Heart right ventricle (tissue), 16 donors: ENCODE measurements at regions of chr17 and their contacts with region 1.

Region 1: DNA sequence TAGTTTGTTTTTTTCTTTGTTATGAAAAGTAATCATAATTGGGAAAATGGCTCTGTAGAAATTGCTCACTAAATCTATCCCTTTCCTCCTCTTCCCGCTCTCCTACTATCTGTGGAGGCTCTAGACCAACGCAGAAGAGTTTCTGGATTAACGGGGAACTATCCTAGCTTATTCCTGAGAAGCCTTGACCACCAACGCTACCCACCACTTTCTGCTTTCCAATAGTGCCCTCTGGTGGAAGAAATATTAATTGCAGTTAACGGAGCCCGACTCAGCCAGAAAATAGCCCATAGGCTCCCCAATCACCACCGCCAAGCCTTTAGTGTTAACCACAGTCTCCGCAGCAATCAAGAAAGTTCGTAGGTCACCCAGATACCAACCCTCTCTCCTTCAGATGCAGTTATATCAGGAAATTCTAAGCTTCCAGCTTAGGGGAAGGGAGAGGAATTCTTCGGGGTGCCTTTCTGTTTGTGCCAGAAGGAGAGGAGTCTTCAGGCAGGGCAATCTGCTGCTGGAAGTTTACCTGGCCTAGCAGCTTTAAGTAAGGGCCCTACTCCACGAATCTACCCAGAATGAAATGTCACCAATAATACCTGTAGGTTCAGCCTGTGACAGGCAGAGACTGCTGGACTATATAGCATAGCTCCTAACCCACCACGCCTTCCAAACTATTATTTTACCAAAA is 23.0 kb upstream of the NSRP1 start:
- DNase-seq: peak in 1 of 2 donors; percentile 50
- ATAC-seq: peak; percentile 53 to 82 (median 74)
- H3K4me3 ChIP-seq: no peak overlapping the region
- H3K27ac ChIP-seq: no peak overlapping the region
- H3K4me1 ChIP-seq: peaks cover 0 to 10% (median 7%) of the 10 kb centered on the region in 9 donors
- H3K27me3 ChIP-seq: peaks cover 0 to 15% (median 3%) of the 10 kb centered on the region in 7 donors
- CTCF ChIP-seq: peak; percentile 79 to 89 (median 83)

Region 2: DNA sequence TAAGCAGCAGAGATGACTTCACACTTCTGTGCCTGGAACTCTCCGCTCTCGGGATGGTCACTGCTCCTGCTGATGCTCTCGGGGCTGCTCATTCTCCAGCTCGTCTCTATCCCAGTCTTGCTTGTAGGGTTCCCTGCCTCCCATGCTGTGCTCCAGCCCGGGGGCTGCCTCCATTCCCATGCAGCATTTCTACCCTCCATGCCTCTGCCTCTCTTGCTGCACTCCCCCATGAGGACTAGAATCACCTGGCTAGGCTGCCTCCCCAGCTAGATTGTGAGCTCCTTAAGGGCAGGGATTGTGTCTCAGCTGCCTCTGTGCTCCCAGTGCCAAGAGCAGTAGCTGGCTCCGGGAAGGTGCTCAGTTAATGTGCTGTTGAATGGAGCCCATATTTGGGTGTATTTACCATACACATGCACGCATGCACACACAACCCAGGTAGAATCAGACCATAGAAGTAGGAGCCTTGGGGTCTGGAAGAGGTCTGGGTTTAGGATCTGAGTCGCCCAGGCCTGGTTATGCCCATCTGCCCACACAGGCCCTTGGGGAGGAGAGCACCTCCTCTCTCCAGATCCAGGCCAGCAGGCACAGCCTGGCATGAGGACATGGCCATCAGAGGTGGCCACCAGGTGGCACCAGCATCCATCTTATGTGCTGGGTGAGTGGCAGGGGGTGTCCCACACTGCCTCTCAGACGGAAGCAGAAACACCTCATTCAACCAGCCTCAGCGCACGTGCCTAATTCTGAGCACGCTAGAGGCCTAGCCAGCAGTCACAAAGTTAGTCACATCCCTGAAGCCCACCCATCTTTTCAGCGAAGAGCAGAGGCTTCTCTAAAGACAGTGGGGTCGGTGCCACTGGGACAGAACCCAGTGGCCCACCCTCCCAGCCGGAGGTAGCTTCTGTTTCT is 513.5 kb before region 1 on chr17:
- intact Hi-C with region 1: loop called in 1 of 10 experiments (anchors 5 kb)
- DNase-seq: peak; percentile 81 to 87
- ATAC-seq: peak; percentile 62 to 81 (median 73)
- H3K4me3 ChIP-seq: no peak overlapping the region
- H3K27ac ChIP-seq: peak overlapping the region in 3 of 10 donors; percentile 23 to 34 (median 24)
- H3K4me1 ChIP-seq: peaks cover 0 to 47% (median 24%) of the 10 kb centered on the region in 9 donors
- H3K27me3 ChIP-seq: no peaks in the 10 kb centered on the region
- CTCF ChIP-seq: peak; percentile 85 to 93 (median 91)

Region 3: DNA sequence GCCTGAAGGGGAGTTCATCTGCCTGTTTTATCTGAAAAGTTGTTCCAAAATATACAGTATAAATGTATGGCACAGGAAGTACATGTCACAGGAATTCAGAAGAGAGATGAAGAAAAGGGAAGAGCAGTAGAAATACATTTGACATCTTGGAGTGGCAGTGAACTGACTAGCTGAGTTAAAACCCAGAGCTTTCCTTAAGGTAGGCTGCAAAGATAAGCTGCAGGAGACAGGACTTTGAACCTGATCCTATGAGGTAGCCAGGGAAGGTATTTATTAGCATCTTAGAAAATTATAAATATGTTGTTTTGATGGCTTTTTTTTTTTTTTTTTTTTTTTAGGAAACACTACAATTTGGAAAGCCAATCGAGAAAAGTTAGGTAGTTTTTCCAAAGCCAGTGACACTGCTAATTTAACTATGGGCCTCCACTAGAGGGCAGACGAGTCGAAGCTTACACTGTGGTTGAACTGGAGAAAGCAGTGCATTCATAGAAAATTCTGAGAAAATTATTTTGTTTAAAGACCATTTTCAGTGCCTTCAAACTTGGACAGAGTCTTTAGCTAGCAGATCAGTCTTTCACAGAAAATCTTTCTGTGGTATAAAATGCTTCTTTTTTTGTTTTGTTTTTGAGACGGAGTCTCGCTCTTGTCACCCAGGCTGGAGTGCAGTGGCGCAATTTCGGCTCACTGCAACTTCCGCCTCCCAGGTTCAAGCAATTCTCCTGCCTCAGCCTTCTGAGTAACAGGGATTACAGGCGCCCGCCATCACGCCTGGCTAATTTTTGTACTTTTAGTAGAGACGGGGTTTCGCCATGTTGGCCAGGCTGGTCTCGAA is 285.9 kb before region 1 on chr17:
- intact Hi-C with region 1: loop called in 8 of 10 experiments (anchors 5 to 10 kb)
- DNase-seq: peak in 1 of 2 donors; percentile 67
- ATAC-seq: peak; percentile 46 to 80 (median 72)
- H3K4me3 ChIP-seq: peak overlapping the region in 1 of 10 donors; percentile 37
- H3K27ac ChIP-seq: peak overlapping the region in 1 of 10 donors; percentile 74
- H3K4me1 ChIP-seq: peaks cover 0 to 7% (median 0%) of the 10 kb centered on the region in 9 donors
- H3K27me3 ChIP-seq: no peaks in the 10 kb centered on the region
- CTCF ChIP-seq: peak; percentile 64 to 86 (median 83)

Region 4: DNA sequence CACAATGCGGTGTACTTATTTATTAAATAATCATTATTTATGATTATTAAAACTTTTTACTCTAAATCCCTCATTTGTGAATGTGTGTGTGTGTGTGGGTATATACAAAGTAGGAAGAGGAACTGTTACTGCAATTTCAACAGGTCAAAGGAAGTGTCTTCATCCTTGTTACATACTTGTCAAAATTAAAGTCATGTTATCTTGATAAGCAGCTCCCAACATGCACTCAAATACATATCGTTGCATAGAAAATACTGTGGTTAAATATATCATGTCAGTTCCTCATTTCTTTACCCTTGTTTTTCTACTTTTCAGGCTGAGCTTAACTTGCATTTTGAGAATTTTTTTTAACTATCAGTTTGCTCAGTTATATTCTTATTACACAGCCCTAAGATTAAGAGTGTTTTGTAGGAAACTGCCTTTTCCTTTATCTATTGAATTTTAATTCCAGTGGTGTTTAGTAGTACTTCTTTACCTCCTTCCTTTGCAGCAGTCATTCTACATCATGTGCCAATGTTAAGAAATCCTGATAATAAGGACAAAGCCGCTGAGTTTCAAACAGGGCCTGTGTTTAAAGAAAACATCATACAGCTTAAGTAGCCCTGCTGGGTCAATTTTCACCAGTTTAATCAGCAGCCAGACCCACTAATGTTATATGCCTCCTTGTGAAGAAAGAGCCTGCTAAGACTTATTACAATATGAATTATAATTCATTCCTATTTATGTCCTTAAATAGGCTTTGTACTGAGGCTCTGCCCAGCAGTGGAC is 145.0 kb before region 1 on chr17:
- intact Hi-C with region 1: loop called in 2 of 10 experiments (anchors 10 kb)
- DNase-seq: no peak
- ATAC-seq: no peak
- H3K4me3 ChIP-seq: no peak overlapping the region
- H3K27ac ChIP-seq: peak overlapping the region in 1 of 10 donors; percentile 4
- H3K4me1 ChIP-seq: no peaks in the 10 kb centered on the region
- H3K27me3 ChIP-seq: peaks cover 0 to 3% (median 0%) of the 10 kb centered on the region in 7 donors
- CTCF ChIP-seq: no peak

Region 5: DNA sequence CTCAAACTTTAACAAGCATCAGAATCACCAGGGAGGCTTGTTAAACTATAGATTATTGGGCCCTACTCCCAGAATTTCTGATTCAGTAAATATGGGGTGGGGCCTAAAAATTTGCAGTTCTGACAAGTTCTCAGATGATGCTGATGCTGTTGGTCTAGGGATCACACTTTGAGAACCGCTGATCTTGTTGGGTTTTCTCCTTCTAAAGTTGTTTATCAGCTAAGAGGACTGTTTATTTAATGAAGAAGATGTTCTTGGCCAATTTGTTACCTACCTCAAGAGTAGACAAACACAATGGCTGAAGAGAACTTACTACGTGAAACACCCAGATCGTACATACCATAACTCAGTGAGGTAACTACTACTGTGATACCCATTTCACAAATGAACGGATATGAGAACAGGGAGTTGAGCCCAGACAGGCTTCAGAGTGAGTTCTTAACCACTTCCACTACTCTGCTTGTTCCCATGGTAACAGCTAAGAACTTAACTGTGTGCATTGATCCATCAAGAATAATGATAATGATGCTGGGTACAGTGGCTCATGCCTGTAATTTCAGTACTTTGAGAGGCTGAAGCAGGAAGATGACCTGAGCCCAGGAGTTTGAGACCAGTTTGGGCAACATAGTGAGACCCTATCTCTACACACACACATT is 62.3 kb before region 1 on chr17:
- intact Hi-C with region 1: loop called in 3 of 10 experiments (anchors 5 kb)
- DNase-seq: no peak
- ATAC-seq: no peak
- H3K4me3 ChIP-seq: no peak overlapping the region
- H3K27ac ChIP-seq: no peak overlapping the region
- H3K4me1 ChIP-seq: no peaks in the 10 kb centered on the region
- H3K27me3 ChIP-seq: no peaks in the 10 kb centered on the region
- CTCF ChIP-seq: no peak

Region 6: GRCh38 chr17:30161601-30162000 is 68.0 kb after region 1 on chr17:
- intact Hi-C with region 1: no loop called
- DNase-seq: no peak
- ATAC-seq: no peak
- H3K4me3 ChIP-seq: no peak overlapping the region
- H3K27ac ChIP-seq: no peak overlapping the region
- H3K4me1 ChIP-seq: no peaks in the 10 kb centered on the region
- H3K27me3 ChIP-seq: no peaks in the 10 kb centered on the region
- CTCF ChIP-seq: no peak